ENCODE measurements at regions of chr16 and their contacts with region 1.

Region 1: GRCh38 chr16:11255737-11256660 is at the start of gene SOCS1:
- DNase-seq: peak; percentile 84 to 88
- ATAC-seq: peak; percentile 77 to 90 (median 84)
- H3K4me3 ChIP-seq: peak within 1 kb of the TSS; percentile 42 to 93 (median 82)
- H3K27ac ChIP-seq: peak within 1 kb of the TSS; percentile 92 to 100 (median 98)
- H3K4me1 ChIP-seq: peaks cover 15 to 66% (median 34%) of the 10 kb centered on the region in 9 donors
- H3K27me3 ChIP-seq: no peaks in the 10 kb centered on the region
- CTCF ChIP-seq: peak in 8 of 9 donors; percentile 68 to 96 (median 92)
- total RNA-seq, gene SOCS1: 0.60 to 12.2 (median 2.1) TPM

Region 2: DNA sequence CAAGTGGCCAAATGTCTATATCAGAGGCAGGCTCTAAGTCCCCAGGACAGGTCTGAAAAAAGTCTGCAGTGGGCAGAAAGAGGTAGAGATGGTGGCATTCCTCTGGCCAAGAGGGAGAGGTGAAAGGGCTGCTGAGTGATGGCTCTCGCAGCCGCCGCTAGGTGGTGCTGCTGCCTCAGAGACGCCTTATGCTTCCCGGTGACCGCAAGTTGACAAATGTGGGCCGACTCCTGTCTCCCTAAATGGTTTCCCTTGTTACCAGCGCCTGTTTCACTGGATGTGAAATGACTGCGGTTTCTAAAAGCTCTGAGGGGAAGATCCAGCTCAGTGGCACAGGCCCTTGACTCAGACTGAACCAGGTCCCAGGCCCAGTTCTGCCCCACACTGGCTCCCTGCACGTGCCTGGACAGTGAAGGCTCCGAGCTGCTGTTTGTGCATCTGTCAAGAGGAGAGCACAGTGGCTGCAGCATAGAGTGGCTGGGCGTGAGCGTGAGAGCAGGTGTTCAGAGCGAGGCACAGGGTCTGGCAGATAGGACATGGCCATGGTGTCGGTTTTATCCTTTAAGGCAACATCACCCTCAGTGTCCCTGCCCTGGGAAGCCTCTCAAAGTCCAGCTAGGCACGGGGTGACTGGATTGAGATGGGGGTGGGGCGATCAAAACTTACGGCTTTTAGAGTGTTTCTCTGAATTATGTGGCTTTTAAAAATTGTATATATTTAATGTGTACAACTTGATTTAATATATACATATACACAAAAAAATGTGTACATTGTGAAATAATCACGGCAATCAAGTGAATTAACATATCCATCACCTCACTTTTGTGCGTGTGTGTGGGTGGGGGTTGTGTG is 291.7 kb before region 1 on chr16:
- intact Hi-C with region 1: loop called in 4 of 10 experiments (anchors 1 to 5 kb)
- DNase-seq: peak; percentile 83 to 87
- ATAC-seq: peak; percentile 81 to 91 (median 86)
- H3K4me3 ChIP-seq: no peak overlapping the region
- H3K27ac ChIP-seq: peak overlapping the region in 3 of 10 donors; percentile 30 to 47 (median 46)
- H3K4me1 ChIP-seq: peaks cover 4 to 39% (median 14%) of the 10 kb centered on the region in 9 donors
- H3K27me3 ChIP-seq: no peaks in the 10 kb centered on the region
- CTCF ChIP-seq: peak; percentile 78 to 98 (median 96)

Region 3: DNA sequence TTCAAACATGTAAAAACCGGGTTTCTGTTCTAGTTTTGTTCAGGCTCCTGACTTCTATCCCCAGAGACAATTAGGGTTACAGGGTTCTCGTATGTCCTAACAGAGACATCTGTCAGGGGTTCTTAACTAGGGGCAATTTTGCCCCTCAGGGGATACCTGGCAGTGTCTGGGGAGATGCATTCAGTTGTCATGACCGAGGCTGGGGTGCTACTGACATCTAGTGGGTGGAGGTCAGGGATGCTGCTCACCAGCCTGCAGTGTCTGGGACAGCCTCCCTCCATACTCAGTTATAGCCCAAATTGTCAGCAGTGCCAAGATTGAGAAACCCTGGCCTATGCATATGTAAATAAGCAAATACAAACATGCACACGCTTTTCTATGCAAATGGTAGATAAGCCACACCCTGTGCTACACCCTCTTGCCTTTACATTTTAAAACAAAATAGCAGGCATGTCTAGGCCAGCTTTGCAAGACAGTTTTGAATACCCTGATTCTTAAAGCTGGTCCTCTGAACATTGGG is 274.2 kb before region 1 on chr16:
- intact Hi-C with region 1: loop called in 1 of 10 experiments (anchors 5 kb)
- DNase-seq: no peak
- ATAC-seq: peak in 2 of 8 donors; percentile 20
- H3K4me3 ChIP-seq: no peak overlapping the region
- H3K27ac ChIP-seq: peak overlapping the region in 2 of 10 donors; percentile 20 to 48
- H3K4me1 ChIP-seq: peaks cover 0 to 32% (median 11%) of the 10 kb centered on the region in 9 donors
- H3K27me3 ChIP-seq: no peaks in the 10 kb centered on the region
- CTCF ChIP-seq: peak in 4 of 9 donors; percentile 10 to 28 (median 12)

Region 4: GRCh38 chr16:11133344-11133943 is 122.6 kb before region 1 on chr16:
- intact Hi-C with region 1: loop called in 3 of 10 experiments (anchors 5 to 10 kb)
- DNase-seq: peak; percentile 60 to 81
- ATAC-seq: peak; percentile 57 to 78 (median 68)
- H3K4me3 ChIP-seq: no peak overlapping the region
- H3K27ac ChIP-seq: peak overlapping the region in 9 of 10 donors; percentile 21 to 89 (median 65)
- H3K4me1 ChIP-seq: peaks cover 8 to 86% (median 74%) of the 10 kb centered on the region in 9 donors
- H3K27me3 ChIP-seq: no peaks in the 10 kb centered on the region
- CTCF ChIP-seq: no peak

Region 5: DNA sequence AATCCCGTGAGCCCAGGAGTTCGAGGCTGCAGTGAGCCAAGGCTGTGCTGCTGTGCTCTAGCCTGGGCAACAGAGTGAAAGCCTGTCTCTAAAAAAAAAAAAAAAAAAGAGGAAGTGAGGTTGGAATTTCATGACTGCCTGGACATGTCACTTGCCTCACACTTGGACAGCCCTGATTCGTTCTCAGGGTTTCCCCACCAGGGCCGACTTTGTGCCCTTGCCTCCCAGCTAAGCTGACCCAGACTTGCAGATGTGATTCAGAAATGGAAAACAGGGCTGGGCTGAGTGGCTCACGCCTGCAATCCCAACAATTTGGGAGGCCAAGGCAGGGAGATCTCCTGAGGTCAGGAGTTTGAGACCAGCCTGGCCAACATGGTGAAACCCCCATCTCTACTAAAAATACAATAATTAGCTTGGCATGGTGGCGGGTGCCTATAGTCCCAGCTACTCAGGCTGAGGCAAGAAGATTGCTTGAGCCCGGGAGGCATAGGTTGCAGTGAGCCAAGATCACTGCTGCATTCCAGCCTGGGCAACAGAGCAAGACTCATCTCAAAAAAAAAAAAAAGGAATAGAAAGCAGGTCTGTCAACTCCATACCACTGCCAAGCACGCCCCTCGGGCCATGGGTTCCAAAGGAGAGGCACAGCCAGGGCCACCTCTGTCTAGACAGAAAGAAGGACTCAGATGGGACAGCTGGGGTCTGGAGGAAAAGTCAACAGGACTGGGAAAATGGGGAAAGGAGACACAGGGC is 46.9 kb before region 1 on chr16:
- intact Hi-C with region 1: no loop called
- DNase-seq: no peak
- ATAC-seq: no peak
- H3K4me3 ChIP-seq: no peak overlapping the region
- H3K27ac ChIP-seq: peak overlapping the region in 1 of 10 donors; percentile 5
- H3K4me1 ChIP-seq: peaks cover 0 to 56% (median 0%) of the 10 kb centered on the region in 9 donors
- H3K27me3 ChIP-seq: peaks cover 0 to 7% (median 5%) of the 10 kb centered on the region in 7 donors
- CTCF ChIP-seq: no peak

Region 6: GRCh38 chr16:11356573-11357331 is 100.8 kb after region 1 on chr16:
- intact Hi-C with region 1: loop called in 9 of 10 experiments (anchors 2 to 10 kb)
- DNase-seq: peak; percentile 62 to 72
- ATAC-seq: peak; percentile 34 to 77 (median 61)
- H3K4me3 ChIP-seq: no peak overlapping the region
- H3K27ac ChIP-seq: peak overlapping the region in 7 of 10 donors; percentile 2 to 87 (median 80)
- H3K4me1 ChIP-seq: peaks cover 5 to 68% (median 33%) of the 10 kb centered on the region in 9 donors
- H3K27me3 ChIP-seq: peaks cover 0 to 47% (median 0%) of the 10 kb centered on the region in 7 donors
- CTCF ChIP-seq: peak; percentile 38 to 73 (median 69)